ENCODE measurements at regions of chr11 and their contacts with region 1.

Region 1: GRCh38 chr11:29448246-29448877 is 568.5 kb downstream of the KCNA4 start:
- DNase-seq: no peak
- H3K4me3 ChIP-seq: no peak overlapping the region
- CTCF ChIP-seq: peak; percentile 45

Region 2: DNA sequence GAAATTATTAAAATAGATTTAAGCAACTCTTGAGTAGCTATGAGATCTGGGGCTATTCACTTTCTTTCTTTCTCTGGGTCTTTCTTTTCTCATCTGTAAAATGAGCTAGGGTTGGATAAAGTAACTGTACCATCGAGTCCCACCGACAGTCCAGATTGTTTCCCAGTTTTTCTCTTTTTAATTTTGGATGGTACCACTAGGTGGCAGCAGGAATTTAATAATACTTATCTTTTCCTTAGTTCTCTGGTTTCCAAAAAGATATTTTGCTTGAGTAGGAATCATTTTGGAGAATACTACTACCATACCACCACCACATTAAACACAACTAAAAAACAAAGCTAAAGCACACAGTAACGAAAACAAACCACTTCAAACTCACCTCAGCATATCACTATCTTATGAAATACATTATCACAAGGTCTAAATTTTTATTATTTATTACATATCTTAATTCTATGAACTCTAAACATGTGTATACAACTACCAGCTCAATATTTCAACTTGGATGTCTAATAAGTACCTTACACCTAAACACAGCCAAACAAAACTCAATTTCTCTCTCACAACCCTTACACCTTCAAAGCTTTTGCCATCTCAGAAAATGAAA is 15.5 kb before region 1 on chr11:
- CTCF ChIA-PET with region 1: interaction called, 15 read pairs
- POLR2A ChIA-PET with region 1: no interaction called
- DNase-seq: no peak
- H3K4me3 ChIP-seq: no peak overlapping the region
- CTCF ChIP-seq: peak; percentile 23

Region 3: GRCh38 chr11:30196400-30197206 is 748.2 kb after region 1 on chr11:
- CTCF ChIA-PET with region 1: interaction called, 13 read pairs
- POLR2A ChIA-PET with region 1: no interaction called
- DNase-seq: no peak
- H3K4me3 ChIP-seq: no peak overlapping the region
- CTCF ChIP-seq: peak; percentile 81

Region 4: GRCh38 chr11:30314625-30315024 is 866.3 kb after region 1 on chr11:
- CTCF ChIA-PET with region 1: interaction called, 12 read pairs
- POLR2A ChIA-PET with region 1: no interaction called
- DNase-seq: no peak
- H3K4me3 ChIP-seq: no peak overlapping the region
- CTCF ChIP-seq: peak; percentile 34